Mammary epithelial cell (primary cell): ENCODE measurements at regions of chr18 and their contacts with region 1.

Region 1: GRCh38 chr18:50573679-50574078 is 13.8 kb downstream of the MAPK4 start:
- DNase-seq: no peak
- H3K4me3 ChIP-seq: no peak overlapping the region
- H3K27ac ChIP-seq: no peak overlapping the region
- H3K4me1 ChIP-seq: no peaks in the 10 kb centered on the region
- H3K27me3 ChIP-seq: peaks cover 2% of the 10 kb centered on the region
- CTCF ChIP-seq: peak; percentile 33 to 35

Region 2: GRCh38 chr18:50507120-50507590 is 66.5 kb before region 1 on chr18:
- CTCF ChIA-PET with region 1: no interaction called
- dilution Hi-C with region 1: no loop called
- in situ Hi-C with region 1: no loop called
- intact Hi-C with region 1: no loop called
- DNase-seq: peak; percentile 13
- H3K4me3 ChIP-seq: no peak overlapping the region
- H3K27ac ChIP-seq: no peak overlapping the region
- H3K4me1 ChIP-seq: no peaks in the 10 kb centered on the region
- H3K27me3 ChIP-seq: no peaks in the 10 kb centered on the region
- CTCF ChIP-seq: peak; percentile 87 to 99

Region 3: DNA sequence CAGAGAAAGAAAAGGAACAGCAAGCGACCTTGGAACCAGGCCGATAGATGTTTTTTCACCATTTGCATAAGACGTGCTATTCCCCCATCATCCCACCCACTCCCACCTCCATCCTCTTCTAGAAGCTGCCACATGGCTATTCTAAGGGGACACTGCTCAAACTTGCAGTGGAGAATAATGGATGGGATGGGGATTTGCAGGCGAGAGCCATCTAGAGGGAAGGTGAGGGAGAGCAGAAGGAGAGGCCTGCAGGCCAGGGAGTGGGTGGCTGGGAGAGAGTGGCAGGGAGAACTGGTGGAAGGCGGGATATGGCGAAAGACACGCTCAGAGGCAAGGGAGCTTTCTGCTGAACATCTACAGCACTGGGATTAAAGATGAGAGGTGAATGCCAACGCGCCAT is 71.1 kb after region 1 on chr18:
- CTCF ChIA-PET with region 1: no interaction called
- dilution Hi-C with region 1: no loop called
- in situ Hi-C with region 1: no loop called
- intact Hi-C with region 1: loop called (anchors 5 kb)
- DNase-seq: no peak
- H3K4me3 ChIP-seq: no peak overlapping the region
- H3K27ac ChIP-seq: no peak overlapping the region
- H3K4me1 ChIP-seq: no peaks in the 10 kb centered on the region
- H3K27me3 ChIP-seq: no peaks in the 10 kb centered on the region
- CTCF ChIP-seq: peak; percentile 36 to 56

Region 4: GRCh38 chr18:50786864-50787263 is 213.2 kb after region 1 on chr18:
- CTCF ChIA-PET with region 1: no interaction called
- dilution Hi-C with region 1: no loop called
- in situ Hi-C with region 1: no loop called
- intact Hi-C with region 1: loop called (anchors 10 kb)
- DNase-seq: no peak
- H3K4me3 ChIP-seq: no peak overlapping the region
- H3K27ac ChIP-seq: no peak overlapping the region
- H3K4me1 ChIP-seq: no peaks in the 10 kb centered on the region
- H3K27me3 ChIP-seq: peaks cover 2% of the 10 kb centered on the region
- CTCF ChIP-seq: no peak